Posterior vena cava (tissue), 2 donors: ENCODE measurements at regions of chr9 and their contacts with region 1.

Region 1: DNA sequence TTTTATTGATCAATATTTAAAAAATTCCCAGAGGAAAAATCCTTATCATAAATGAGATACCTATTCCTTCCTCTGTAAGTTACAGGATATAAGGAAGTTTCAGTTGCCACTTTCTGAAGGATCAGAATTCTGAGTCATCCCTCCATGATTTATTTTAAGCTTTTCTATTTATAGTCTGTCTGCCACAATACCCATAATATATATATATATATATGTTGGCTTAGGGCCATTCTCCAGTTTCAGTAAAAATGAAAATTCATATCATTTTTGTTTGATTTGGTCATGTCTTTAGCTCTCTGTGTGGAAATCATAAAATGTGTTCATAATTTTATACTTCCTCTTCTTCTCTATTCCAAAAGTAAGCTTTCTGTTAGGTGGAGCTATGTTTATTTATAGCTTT is 215.8 kb upstream of the CYLC2 start:
- DNase-seq: no peak

Region 2: GRCh38 chr9:102767076-102767475 is 12.3 kb before region 1 on chr9:
- intact Hi-C with region 1: loop called in 1 of 2 experiments (anchors 1 kb)
- DNase-seq: no peak